ENCODE measurements at regions of chr10 and their contacts with region 1.

Region 1: GRCh38 chr10:67849331-67850011 is 11.5 kb upstream of the DNAJC12 start:
- DNase-seq: peak; percentile 99
- H3K4me3 Mint-ChIP-seq: peak overlapping the region; percentile 90
- H3K27ac Mint-ChIP-seq: peak overlapping the region; percentile 92
- H3K4me1 Mint-ChIP-seq: peaks cover 8% of the 10 kb centered on the region
- H3K27me3 Mint-ChIP-seq: no peaks in the 10 kb centered on the region

Region 2: DNA sequence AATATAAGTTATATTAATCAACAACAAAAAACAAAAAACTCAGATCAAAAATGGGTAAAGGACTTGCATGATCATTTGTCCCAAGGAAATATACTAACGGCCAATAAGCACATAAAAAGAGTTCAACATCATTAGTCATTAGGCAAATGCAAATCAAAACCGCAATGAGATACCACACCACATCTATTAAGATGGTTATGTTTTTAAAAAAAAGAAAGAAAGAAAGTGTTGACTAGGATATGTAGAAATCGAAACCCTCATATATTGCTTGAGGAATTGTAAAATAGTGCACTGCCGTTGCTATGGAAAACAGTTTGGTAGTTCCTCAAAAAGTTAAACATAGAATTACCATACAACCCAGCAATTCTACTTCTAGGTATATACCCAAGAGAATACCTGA is 114.0 kb before region 1 on chr10:
- intact Hi-C with region 1: no loop called
- DNase-seq: no peak
- H3K4me3 Mint-ChIP-seq: no peak overlapping the region
- H3K27ac Mint-ChIP-seq: no peak overlapping the region
- H3K4me1 Mint-ChIP-seq: peaks cover 2% of the 10 kb centered on the region
- H3K27me3 Mint-ChIP-seq: no peaks in the 10 kb centered on the region

Region 3: GRCh38 chr10:67764012-67764822 is 85.3 kb before region 1 on chr10:
- intact Hi-C with region 1: loop called (anchors 1 kb)
- DNase-seq: peak; percentile 99
- H3K4me3 Mint-ChIP-seq: peak overlapping the region; percentile 85
- H3K27ac Mint-ChIP-seq: peak overlapping the region; percentile 92
- H3K4me1 Mint-ChIP-seq: peaks cover 23% of the 10 kb centered on the region
- H3K27me3 Mint-ChIP-seq: peaks cover 8% of the 10 kb centered on the region

Region 4: GRCh38 chr10:67803588-67804394 is 45.7 kb before region 1 on chr10:
- intact Hi-C with region 1: loop called (anchors 1 kb)
- DNase-seq: no peak
- H3K4me3 Mint-ChIP-seq: peak overlapping the region; percentile 30
- H3K27ac Mint-ChIP-seq: peak overlapping the region; percentile 84
- H3K4me1 Mint-ChIP-seq: peaks cover 22% of the 10 kb centered on the region
- H3K27me3 Mint-ChIP-seq: no peaks in the 10 kb centered on the region

Region 5: DNA sequence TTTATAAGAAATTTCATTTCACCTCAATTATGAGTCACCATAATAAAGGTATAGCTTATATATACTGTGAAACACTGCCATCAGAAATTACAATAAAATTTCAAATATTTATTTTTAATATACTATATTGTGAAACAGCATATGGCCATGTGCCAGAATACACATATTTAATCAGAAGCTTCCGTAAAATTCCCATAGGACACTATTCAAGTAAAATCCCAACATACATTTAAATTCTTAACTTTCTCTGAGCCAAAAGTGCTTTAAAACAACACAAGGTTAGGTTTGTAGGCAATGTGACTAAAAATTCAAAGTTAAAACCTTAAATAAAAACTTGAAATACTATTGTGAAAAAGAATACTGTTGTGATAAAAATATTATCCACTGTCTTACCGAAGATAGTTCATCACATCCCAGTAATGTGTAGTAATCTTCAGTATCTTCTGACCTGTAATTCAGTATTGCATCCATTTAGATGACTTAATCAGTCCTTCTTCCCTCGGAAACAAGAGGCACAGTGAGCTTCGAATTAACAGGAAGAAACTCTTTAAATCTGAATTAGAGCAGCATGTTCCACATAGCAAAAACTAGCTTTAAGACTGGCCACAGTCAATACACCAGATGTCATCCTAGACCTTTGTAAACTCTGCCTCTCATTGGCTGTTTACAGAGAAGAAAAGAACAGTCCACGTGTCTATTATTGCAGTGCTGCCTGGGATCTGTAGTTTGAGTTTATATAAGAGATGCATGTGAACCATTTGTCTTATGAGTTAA is 11.7 kb before region 1 on chr10 and contains the start of gene DNAJC12:
- intact Hi-C with region 1: loop called (anchors 1 kb)
- DNase-seq: peak; percentile 74
- H3K4me3 Mint-ChIP-seq: peak within 1 kb of the TSS; percentile 81
- H3K27ac Mint-ChIP-seq: peak within 1 kb of the TSS; percentile 56
- H3K4me1 Mint-ChIP-seq: peaks cover 9% of the 10 kb centered on the region
- H3K27me3 Mint-ChIP-seq: no peaks in the 10 kb centered on the region
- total RNA-seq, gene DNAJC12: 23.8 and 24.2 TPM in 2 replicates

Region 6: GRCh38 chr10:67884313-67884841 is 34.9 kb after region 1 on chr10 and contains the start of gene SIRT1:
- intact Hi-C with region 1: loop called (anchors 1 kb)
- DNase-seq: peak; percentile 98
- H3K4me3 Mint-ChIP-seq: peak within 1 kb of the TSS; percentile 97
- H3K27ac Mint-ChIP-seq: peak within 1 kb of the TSS; percentile 90
- H3K4me1 Mint-ChIP-seq: peaks cover 23% of the 10 kb centered on the region
- H3K27me3 Mint-ChIP-seq: peaks cover 3% of the 10 kb centered on the region
- total RNA-seq, gene SIRT1: 27.1 and 27.8 TPM in 2 replicates

Region 7: DNA sequence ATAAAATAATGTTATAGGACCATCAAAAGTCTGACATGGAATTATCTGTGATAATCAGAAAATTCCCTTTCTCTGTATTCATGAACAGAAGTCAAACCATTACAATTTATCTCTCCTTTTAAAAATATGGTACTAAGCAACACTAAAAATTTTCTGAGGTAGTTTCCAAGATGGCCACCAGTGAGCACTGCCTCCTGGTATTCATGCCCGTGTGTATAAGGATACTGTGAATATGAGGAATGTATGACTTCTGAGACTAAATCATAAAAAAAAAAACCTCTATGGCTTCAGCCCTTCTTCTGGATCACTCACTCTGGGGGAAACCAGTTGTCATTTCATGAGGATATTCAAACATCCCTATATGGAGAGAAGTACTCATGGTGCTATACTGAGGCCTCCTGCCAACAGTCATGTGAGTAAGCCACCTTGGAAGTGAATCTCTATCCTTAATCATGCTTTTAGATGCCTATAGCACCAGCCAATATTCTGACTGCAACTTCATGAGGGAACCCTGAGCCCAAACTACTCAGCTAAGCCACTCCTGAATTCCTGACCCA is 76.1 kb after region 1 on chr10:
- intact Hi-C with region 1: loop called (anchors 10 kb)
- DNase-seq: no peak
- H3K4me3 Mint-ChIP-seq: no peak overlapping the region
- H3K27ac Mint-ChIP-seq: no peak overlapping the region
- H3K4me1 Mint-ChIP-seq: no peaks in the 10 kb centered on the region
- H3K27me3 Mint-ChIP-seq: no peaks in the 10 kb centered on the region

Measured in activated CD4-positive, alpha-beta T cell treated with anti-CD3 and anti-CD28 coated beads, Interleukin-2, amount 10 ng/mL, durations not matched to agents 24 days and 14 days (primary cell).